Activated naive CD4-positive, alpha-beta T cell treated with anti-CD3 and anti-CD28 coated beads, Interleukin-2, amount 10 ng/mL, durations not matched to agents 7 days and 5 days (primary cell): ENCODE measurements at regions of chr1 and their contacts with region 1.

Region 1: DNA sequence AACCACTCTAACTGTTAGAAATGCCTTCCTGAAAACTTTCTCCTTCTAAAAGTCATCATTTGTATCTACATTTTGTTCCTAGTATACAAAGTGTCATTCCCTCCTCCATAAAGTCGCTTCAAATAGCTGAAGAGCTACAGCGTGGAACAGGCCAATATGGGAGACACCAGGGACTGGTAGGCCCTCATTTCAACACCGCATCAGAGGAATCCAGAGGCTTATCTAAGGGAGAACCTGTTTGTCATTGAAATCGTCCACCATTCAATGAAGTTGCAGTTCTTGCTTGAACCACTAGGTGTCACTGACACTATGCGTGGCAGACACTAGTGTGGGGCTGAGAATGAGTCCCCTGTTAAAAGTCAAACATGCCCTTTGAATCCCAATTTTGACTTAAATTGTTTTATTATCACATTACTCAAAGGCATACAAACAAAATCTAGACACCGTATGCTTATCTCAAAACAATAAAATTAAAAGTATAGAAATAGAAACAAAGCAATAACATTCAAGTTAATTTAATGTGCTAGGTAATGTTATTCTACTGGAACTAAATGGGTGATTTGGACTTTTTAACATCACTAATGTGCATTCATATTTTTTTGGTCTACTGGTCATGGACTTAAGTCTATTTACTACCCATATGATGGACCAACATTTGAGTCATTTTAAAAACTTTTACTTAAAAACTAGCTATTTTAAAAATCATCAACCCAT is 182.3 kb downstream of the FCRL5 start:
- DNase-seq: peak; percentile 48
- H3K4me3 Mint-ChIP-seq: no peak overlapping the region
- H3K27ac Mint-ChIP-seq: no peak overlapping the region
- H3K4me1 Mint-ChIP-seq: no peaks in the 10 kb centered on the region
- H3K27me3 Mint-ChIP-seq: peaks cover 27% of the 10 kb centered on the region

Region 2: GRCh38 chr1:157312082-157312812 is 57.7 kb before region 1 on chr1:
- CTCF ChIA-PET with region 1: no interaction called
- DNase-seq: no peak
- H3K4me3 Mint-ChIP-seq: no peak overlapping the region
- H3K27ac Mint-ChIP-seq: no peak overlapping the region
- H3K4me1 Mint-ChIP-seq: no peaks in the 10 kb centered on the region
- H3K27me3 Mint-ChIP-seq: peaks cover 48% of the 10 kb centered on the region

Region 3: GRCh38 chr1:157496121-157496526 is 126.2 kb after region 1 on chr1:
- CTCF ChIA-PET with region 1: interaction called, 14 read pairs
- DNase-seq: peak; percentile 49
- H3K4me3 Mint-ChIP-seq: no peak overlapping the region
- H3K27ac Mint-ChIP-seq: no peak overlapping the region
- H3K4me1 Mint-ChIP-seq: no peaks in the 10 kb centered on the region
- H3K27me3 Mint-ChIP-seq: peaks cover 29% of the 10 kb centered on the region